Dorsolateral prefrontal cortex (tissue), 120 donors: ENCODE measurements at regions of chr9 and their contacts with region 1.

Region 1: DNA sequence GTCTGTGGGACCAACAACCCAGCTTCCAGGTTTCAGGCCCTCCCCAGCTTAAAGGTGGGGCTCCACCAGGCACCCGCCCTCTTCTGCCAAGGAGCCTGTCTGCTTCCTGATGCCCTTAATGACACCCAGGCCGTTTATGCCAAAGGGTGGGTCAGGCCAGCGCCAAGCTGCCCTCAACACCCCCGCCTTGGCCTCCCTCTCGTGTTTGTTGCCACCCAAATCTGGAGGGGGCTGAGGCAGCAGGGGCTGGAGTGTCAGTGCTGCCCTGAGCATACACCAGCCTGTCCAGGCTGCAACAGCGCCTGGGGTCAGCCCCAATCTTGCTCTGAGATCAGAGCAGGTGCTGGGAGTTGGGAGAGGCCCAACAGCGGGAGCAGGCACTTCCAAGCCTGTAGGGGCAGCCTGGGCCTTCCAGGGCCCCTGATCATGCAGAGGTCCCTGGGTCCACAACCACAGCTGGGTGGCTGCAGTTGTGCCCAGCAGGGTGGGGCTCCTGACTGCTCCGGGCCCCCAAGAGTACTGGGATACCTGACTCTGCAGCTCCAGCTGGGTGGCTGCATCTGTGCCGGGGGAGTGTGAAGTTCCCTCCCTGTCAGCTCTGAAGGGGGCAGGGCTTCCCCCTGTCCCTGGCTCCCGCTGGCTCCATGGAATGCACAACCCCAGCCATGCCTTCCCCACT is 34.5 kb upstream of the TYRP1 start:
- DNase-seq: no peak
- H3K4me3 ChIP-seq: no peak overlapping the region
- H3K27ac ChIP-seq: no peak overlapping the region
- H3K27me3 ChIP-seq: no peaks in the 10 kb centered on the region
- CTCF ChIP-seq: no peak

Region 2: DNA sequence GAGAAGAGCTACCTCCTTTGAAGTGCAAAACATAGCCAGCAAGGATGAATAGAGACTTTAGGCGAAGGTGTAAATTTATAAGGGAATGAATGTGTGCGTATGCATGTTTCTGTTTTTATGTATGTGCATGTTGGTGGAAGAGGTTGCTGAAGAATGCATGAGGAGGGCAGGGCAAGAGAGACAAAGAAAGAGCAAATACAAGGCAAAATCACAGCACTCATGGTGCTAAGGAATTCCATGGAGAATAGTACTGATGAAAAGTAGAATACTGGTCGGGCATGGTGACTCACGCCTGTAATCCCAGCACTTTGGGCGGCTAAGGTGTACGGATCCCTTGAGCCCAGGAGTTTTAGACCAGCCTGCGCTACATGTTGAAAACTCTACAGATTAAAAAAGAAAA is 1283.7 kb before region 1 on chr9:
- intact Hi-C with region 1: loop called in 1 of 2 experiments (anchors 10 kb)
- DNase-seq: no peak
- H3K4me3 ChIP-seq: no peak overlapping the region
- H3K27ac ChIP-seq: no peak overlapping the region
- H3K27me3 ChIP-seq: no peaks in the 10 kb centered on the region
- CTCF ChIP-seq: no peak

Region 3: DNA sequence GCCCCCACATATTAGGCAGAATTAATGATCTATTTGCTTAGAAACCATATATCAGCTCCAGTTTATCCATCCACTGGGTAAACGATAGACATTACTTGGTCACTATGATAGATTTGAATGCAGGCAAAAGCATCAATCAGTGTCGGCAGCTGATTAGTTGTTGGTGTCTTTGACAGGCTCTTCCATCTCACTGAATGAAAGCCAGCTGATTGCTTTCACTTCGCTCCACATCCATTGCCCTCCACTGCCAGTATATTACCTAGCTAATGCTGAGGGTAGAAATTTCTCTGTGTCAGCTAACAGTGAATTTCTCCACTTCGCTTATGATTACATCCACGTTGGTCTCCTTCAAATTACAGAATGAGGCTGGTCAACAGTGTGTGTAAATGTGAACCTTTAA is 786.8 kb before region 1 on chr9:
- intact Hi-C with region 1: no loop called
- DNase-seq: no peak
- H3K4me3 ChIP-seq: peak overlapping the region in 2 of 59 donors; percentile 5 to 10
- H3K27ac ChIP-seq: no peak overlapping the region
- H3K27me3 ChIP-seq: no peaks in the 10 kb centered on the region
- CTCF ChIP-seq: no peak

Region 4: GRCh38 chr9:12457237-12457636 is 201.4 kb before region 1 on chr9:
- intact Hi-C with region 1: no loop called
- DNase-seq: no peak
- H3K4me3 ChIP-seq: no peak overlapping the region
- H3K27ac ChIP-seq: no peak overlapping the region
- H3K27me3 ChIP-seq: no peaks in the 10 kb centered on the region
- CTCF ChIP-seq: no peak